ENCODE measurements at regions of chr10 and their contacts with region 1.

Region 1: DNA sequence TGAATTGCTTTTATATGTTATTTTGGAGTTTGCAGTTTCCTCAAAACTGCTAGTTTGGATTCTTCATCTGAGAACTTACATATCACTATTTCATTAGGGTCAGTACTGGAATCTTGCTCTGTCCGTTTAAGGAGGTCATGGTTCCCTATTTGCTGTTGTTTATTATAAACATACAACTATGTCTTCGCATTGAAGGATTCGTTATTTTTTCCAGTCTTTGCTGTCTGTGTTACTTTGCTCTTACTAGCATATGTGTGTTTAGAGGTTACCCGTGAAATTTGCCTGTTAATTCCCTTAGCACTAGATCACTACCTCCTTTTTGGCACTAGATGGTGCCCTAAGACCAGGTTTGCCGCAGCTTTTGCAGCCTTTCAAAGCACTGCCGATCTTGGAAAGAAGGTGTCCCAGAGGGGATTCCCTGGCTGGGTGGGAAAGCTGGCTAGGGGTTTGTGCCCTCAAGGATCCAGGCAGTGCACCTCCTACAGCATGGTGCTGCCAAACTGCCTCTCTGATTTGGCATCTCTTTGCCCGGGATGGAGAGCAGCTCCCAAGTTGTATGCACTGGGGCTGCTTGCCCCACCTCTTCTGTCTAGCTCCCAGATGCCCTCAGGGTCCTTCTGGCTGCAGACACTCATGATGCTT is 103.1 kb upstream of the APBB1IP start:
- DNase-seq: peak; percentile 73
- ATAC-seq: peak; percentile 95
- H3K4me3 ChIP-seq: peak overlapping the region; percentile 62
- H3K27ac ChIP-seq: peak overlapping the region; percentile 71
- H3K4me1 ChIP-seq: peaks cover 8% of the 10 kb centered on the region
- H3K27me3 ChIP-seq: no peaks in the 10 kb centered on the region
- CTCF ChIP-seq: peak; percentile 70 to 92 (median 85)
- EP300 ChIP-seq: no peak
- POLR2A ChIP-seq: no peak; the same call in 1 of the 2 replicates
- RAD21 ChIP-seq: peak; percentile 99

Region 2: DNA sequence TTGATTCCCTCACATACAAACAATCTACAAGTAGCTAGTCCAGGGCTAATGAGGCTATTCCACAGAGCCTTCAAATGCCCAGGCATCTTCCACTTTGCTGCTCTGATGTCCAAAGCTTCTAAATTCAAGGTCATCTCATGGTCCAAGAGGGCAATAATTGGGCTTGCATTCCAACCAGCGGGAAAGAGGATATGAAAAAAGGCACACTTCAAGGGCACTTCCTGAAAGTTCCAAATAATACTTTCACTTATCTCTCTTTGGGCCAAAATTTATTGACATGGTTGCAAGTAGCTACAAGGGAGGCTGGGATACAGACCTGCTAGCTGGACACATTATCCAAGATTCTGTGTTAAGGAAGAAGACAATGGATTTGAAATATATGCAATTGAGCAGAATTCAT is 77.9 kb after region 1 on chr10:
- CTCF ChIA-PET with region 1: interaction called, 4 read pairs
- POLR2A ChIA-PET with region 1: no interaction called
- RAD21 ChIA-PET with region 1: interaction called, 6 read pairs
- SMC1A ChIA-PET with region 1: interaction called, 12 read pairs
- in situ Hi-C with region 1: no loop called
- intact Hi-C with region 1: no loop called
- DNase-seq: no peak
- ATAC-seq: no peak
- H3K4me3 ChIP-seq: no peak overlapping the region
- H3K27ac ChIP-seq: no peak overlapping the region
- H3K4me1 ChIP-seq: peaks cover 26% of the 10 kb centered on the region
- H3K27me3 ChIP-seq: no peaks in the 10 kb centered on the region
- CTCF ChIP-seq: no peak
- EP300 ChIP-seq: no peak
- POLR2A ChIP-seq: no peak
- RAD21 ChIP-seq: no peak

Region 3: GRCh38 chr10:26437637-26438461 is 102.8 kb after region 1 on chr10 and contains the start of gene APBB1IP:
- CTCF ChIA-PET with region 1: interaction called, 17 read pairs
- POLR2A ChIA-PET with region 1: no interaction called
- RAD21 ChIA-PET with region 1: interaction called, 16 read pairs
- SMC1A ChIA-PET with region 1: interaction called, 4 read pairs
- in situ Hi-C with region 1: no loop called
- intact Hi-C with region 1: loop called (anchors 2 kb)
- DNase-seq: peak; percentile 61
- ATAC-seq: peak; percentile 77
- H3K4me3 ChIP-seq: peak within 1 kb of the TSS; percentile 89
- H3K27ac ChIP-seq: peak within 1 kb of the TSS; percentile 95
- H3K4me1 ChIP-seq: peaks cover 15% of the 10 kb centered on the region; the same call in 1 of the 2 replicates
- H3K27me3 ChIP-seq: no peaks in the 10 kb centered on the region
- CTCF ChIP-seq: peak in 2 of 3 experiments; percentile 4 to 6; a peak in 1 of 6 replicates
- EP300 ChIP-seq: peak in 1 of 2 experiments; percentile 6; a peak in 1 of 4 replicates
- POLR2A ChIP-seq: peak; percentile 64
- RAD21 ChIP-seq: peak; percentile 20
- polyA plus RNA-seq, gene APBB1IP: 7.3 to 11.4 TPM

Region 4: GRCh38 chr10:26486991-26487850 is 152.2 kb after region 1 on chr10:
- CTCF ChIA-PET with region 1: no interaction called
- POLR2A ChIA-PET with region 1: no interaction called
- RAD21 ChIA-PET with region 1: no interaction called
- SMC1A ChIA-PET with region 1: interaction called, 4 read pairs
- in situ Hi-C with region 1: no loop called
- intact Hi-C with region 1: loop called (anchors 5 kb)
- DNase-seq: peak; percentile 79
- ATAC-seq: peak; percentile 94
- H3K4me3 ChIP-seq: peak overlapping the region; percentile 11; the same call in 1 of the 2 replicates
- H3K27ac ChIP-seq: peak overlapping the region; percentile 67
- H3K4me1 ChIP-seq: peaks cover 9% of the 10 kb centered on the region
- H3K27me3 ChIP-seq: no peaks in the 10 kb centered on the region
- CTCF ChIP-seq: no peak
- EP300 ChIP-seq: peak; percentile 83 to 88
- POLR2A ChIP-seq: no peak
- RAD21 ChIP-seq: no peak

Region 5: DNA sequence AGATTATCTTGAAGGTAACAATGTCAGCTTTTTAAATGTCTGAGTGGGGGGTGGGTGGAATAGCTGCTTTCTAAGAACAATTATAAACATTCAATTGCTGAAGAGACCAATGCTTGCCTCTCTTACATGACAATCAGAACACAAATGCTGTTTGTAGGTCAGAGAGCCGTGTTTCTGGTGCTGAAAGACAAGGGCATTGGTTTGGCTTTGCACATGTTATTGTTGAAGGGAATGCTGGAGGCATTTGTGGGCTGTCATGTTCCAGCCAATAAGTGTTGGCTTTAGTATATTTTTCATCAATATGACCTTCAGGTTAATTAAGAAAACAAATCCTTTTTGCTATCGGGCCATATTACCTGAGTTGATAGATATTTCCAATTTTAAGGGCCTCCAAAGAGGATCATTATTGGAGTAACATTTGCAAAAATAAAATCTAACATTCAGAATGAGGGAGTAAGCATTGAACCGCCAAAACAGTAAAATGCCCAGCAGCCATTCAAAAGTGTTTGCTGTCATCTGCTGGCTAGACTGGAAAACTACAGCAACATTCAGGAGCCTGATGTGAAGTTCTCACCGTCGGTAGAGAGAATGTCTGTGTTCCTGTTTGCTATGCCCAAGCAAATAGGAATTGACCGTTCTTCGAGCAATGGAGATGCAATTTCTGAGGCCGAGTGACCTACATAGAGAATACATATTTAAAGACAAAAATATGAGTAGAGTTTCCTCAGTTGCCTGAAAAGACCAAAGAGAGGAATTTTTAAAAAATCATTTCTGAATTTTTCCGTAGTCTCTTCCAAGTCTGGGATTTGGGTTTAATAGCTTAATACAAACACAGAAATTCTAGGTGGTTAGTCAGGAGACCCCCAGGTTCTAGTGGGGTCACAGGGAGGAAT is 221.9 kb after region 1 on chr10:
- CTCF ChIA-PET with region 1: interaction called, 77 read pairs
- POLR2A ChIA-PET with region 1: no interaction called
- RAD21 ChIA-PET with region 1: interaction called, 45 read pairs
- SMC1A ChIA-PET with region 1: interaction called, 53 read pairs
- in situ Hi-C with region 1: loop called (anchors 5 kb)
- intact Hi-C with region 1: loop called (anchors 1 kb)
- DNase-seq: no peak
- ATAC-seq: peak; percentile 72
- H3K4me3 ChIP-seq: no peak overlapping the region
- H3K27ac ChIP-seq: no peak overlapping the region
- H3K4me1 ChIP-seq: no peaks in the 10 kb centered on the region
- H3K27me3 ChIP-seq: no peaks in the 10 kb centered on the region
- CTCF ChIP-seq: peak; percentile 87 to 96 (median 88)
- EP300 ChIP-seq: no peak
- POLR2A ChIP-seq: no peak
- RAD21 ChIP-seq: peak; percentile 99

Region 6: GRCh38 chr10:26725837-26726727 is 391.0 kb after region 1 on chr10:
- CTCF ChIA-PET with region 1: interaction called, 17 read pairs
- POLR2A ChIA-PET with region 1: no interaction called
- RAD21 ChIA-PET with region 1: interaction called, 21 read pairs
- SMC1A ChIA-PET with region 1: interaction called, 24 read pairs
- in situ Hi-C with region 1: loop called (anchors 10 kb)
- intact Hi-C with region 1: loop called (anchors 10 kb)
- DNase-seq: no peak
- ATAC-seq: peak; percentile 81
- H3K4me3 ChIP-seq: no peak overlapping the region
- H3K27ac ChIP-seq: no peak overlapping the region
- H3K4me1 ChIP-seq: no peaks in the 10 kb centered on the region
- H3K27me3 ChIP-seq: no peaks in the 10 kb centered on the region
- CTCF ChIP-seq: peak; percentile 70 to 89 (median 76); a peak in 5 of 6 replicates
- EP300 ChIP-seq: no peak
- POLR2A ChIP-seq: no peak
- RAD21 ChIP-seq: peak; percentile 97

Region 7: GRCh38 chr10:26881600-26882331 is 546.7 kb after region 1 on chr10:
- CTCF ChIA-PET with region 1: interaction called, 30 read pairs
- POLR2A ChIA-PET with region 1: no interaction called
- RAD21 ChIA-PET with region 1: interaction called, 31 read pairs
- SMC1A ChIA-PET with region 1: interaction called, 32 read pairs
- in situ Hi-C with region 1: loop called (anchors 5 kb)
- intact Hi-C with region 1: loop called (anchors 1 kb)
- DNase-seq: no peak
- ATAC-seq: peak; percentile 96
- H3K4me3 ChIP-seq: no peak overlapping the region
- H3K27ac ChIP-seq: no peak overlapping the region
- H3K4me1 ChIP-seq: no peaks in the 10 kb centered on the region
- H3K27me3 ChIP-seq: no peaks in the 10 kb centered on the region
- CTCF ChIP-seq: peak; percentile 72 to 80 (median 77)
- EP300 ChIP-seq: no peak
- POLR2A ChIP-seq: no peak
- RAD21 ChIP-seq: peak; percentile 98